ENCODE measurements at regions of chr2 and their contacts with region 1.

Region 1: DNA sequence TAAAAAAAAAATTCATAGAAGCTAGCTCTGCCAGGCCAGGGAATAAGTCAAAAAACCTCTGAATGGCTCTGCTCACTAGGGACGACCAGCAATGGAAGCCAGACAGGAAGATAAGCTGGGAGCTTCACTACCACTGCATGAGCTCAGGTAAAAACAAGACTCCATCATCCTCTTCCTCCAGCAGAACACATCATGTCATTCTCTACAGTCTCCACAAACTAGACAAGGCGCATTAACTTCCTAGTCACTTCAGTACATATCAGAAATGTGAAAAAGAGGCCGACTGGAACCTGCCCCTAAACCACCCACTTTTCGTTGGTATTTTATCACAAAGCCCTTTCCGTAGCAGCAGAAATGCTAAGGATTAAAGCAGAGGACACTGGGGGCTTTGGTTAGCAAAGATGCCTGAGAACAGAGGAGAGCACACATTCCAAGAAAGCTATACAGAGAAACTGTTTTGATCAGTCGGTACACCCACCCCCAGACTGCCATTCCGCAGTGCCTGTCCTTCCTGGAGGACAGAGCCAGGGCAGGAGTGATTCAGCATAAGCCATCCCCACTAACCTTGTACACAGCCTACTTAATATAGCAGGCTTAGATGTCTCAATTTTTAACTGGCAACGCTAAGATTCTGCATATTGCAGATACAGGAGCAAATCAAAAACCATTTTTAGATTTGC is 53.4 kb downstream of the AAK1 start:
- DNase-seq: no peak
- ATAC-seq: peak; percentile 64
- H3K4me3 ChIP-seq: no peak overlapping the region
- H3K4me3 Mint-ChIP-seq: peak overlapping the region; percentile 56
- H3K27ac ChIP-seq: no peak overlapping the region
- H3K27ac Mint-ChIP-seq: peak overlapping the region; percentile 76
- H3K4me1 ChIP-seq: peaks cover 60% of the 10 kb centered on the region
- H3K4me1 Mint-ChIP-seq: peaks cover 83% of the 10 kb centered on the region
- H3K27me3 ChIP-seq: no peaks in the 10 kb centered on the region
- H3K27me3 Mint-ChIP-seq: no peaks in the 10 kb centered on the region
- CTCF ChIP-seq: no peak

Region 2: DNA sequence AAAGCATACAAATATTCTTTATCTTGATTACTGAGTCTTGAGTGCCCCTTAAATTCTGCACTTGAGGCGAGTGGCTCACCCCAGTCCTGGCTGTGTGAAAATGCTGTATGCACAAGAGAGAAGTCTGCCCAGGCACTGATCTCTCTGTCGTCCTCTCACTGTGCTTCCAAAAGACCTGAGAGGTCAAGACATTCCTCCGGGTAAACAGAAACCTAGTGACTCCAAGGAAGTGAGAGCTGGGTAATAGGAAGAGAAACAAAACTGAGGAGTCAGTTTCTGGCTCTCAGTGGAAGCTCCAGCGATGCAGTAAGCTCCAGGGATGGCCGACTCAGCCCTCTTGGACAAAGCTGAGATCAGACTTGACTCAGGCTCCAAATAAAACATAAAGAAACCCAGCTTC is 17.5 kb before region 1 on chr2:
- CTCF ChIA-PET with region 1: no interaction called
- POLR2A ChIA-PET with region 1: interaction called, 4 read pairs
- intact Hi-C with region 1: loop called in 1 of 2 experiments (anchors 2 kb)
- DNase-seq: no peak
- ATAC-seq: no peak
- H3K4me3 ChIP-seq: no peak overlapping the region
- H3K4me3 Mint-ChIP-seq: peak overlapping the region; percentile 17
- H3K27ac ChIP-seq: peak overlapping the region in 1 of 2 donors; percentile 29
- H3K27ac Mint-ChIP-seq: peak overlapping the region; percentile 81
- H3K4me1 ChIP-seq: peaks cover 58% of the 10 kb centered on the region
- H3K4me1 Mint-ChIP-seq: peaks cover 90% of the 10 kb centered on the region
- H3K27me3 ChIP-seq: no peaks in the 10 kb centered on the region
- H3K27me3 Mint-ChIP-seq: no peaks in the 10 kb centered on the region
- CTCF ChIP-seq: no peak

Region 3: GRCh38 chr2:69683101-69683971 is 93.2 kb after region 1 on chr2:
- CTCF ChIA-PET with region 1: no interaction called
- POLR2A ChIA-PET with region 1: no interaction called
- intact Hi-C with region 1: no loop called
- DNase-seq: no peak
- ATAC-seq: no peak
- H3K4me3 ChIP-seq: no peak overlapping the region
- H3K4me3 Mint-ChIP-seq: peak overlapping the region; percentile 42
- H3K27ac ChIP-seq: no peak overlapping the region
- H3K27ac Mint-ChIP-seq: peak overlapping the region; percentile 70
- H3K4me1 ChIP-seq: peaks cover 12% of the 10 kb centered on the region
- H3K4me1 Mint-ChIP-seq: peaks cover 73% of the 10 kb centered on the region
- H3K27me3 ChIP-seq: no peaks in the 10 kb centered on the region
- H3K27me3 Mint-ChIP-seq: no peaks in the 10 kb centered on the region
- CTCF ChIP-seq: no peak

Measured in CD4-positive, alpha-beta T cell (primary cell).